ENCODE measurements at regions of chr9 and their contacts with region 1.

Region 1: GRCh38 chr9:130235897-130236668 is 29.5 kb upstream of the HMCN2 start:
- DNase-seq: peak; percentile 50
- ATAC-seq: peak; percentile 63
- H3K4me3 ChIP-seq: no peak overlapping the region
- H3K27ac ChIP-seq: no peak overlapping the region
- H3K4me1 ChIP-seq: peaks cover 8% of the 10 kb centered on the region
- H3K27me3 ChIP-seq: no peaks in the 10 kb centered on the region
- CTCF ChIP-seq: peak; percentile 87
- POLR2A ChIP-seq: no peak
- RAD21 ChIP-seq: peak; percentile 88

Region 2: GRCh38 chr9:130172161-130172857 is 63.8 kb before region 1 on chr9 and contains the start of gene NCS1:
- CTCF ChIA-PET with region 1: no interaction called
- POLR2A ChIA-PET with region 1: no interaction called
- dilution Hi-C with region 1: no loop called
- in situ Hi-C with region 1: no loop called
- intact Hi-C with region 1: loop called (anchors 2 kb)
- DNase-seq: peak; percentile 61
- ATAC-seq: peak; percentile 89
- H3K4me3 ChIP-seq: peak within 1 kb of the TSS; percentile 71
- H3K27ac ChIP-seq: peak within 1 kb of the TSS; percentile 70
- H3K4me1 ChIP-seq: peaks cover 10% of the 10 kb centered on the region
- H3K27me3 ChIP-seq: no peaks in the 10 kb centered on the region
- CTCF ChIP-seq: no peak
- POLR2A ChIP-seq: no peak
- RAD21 ChIP-seq: no peak
- total RNA-seq, gene NCS1: 35.8 and 41.0 TPM in 2 replicates

Region 3: DNA sequence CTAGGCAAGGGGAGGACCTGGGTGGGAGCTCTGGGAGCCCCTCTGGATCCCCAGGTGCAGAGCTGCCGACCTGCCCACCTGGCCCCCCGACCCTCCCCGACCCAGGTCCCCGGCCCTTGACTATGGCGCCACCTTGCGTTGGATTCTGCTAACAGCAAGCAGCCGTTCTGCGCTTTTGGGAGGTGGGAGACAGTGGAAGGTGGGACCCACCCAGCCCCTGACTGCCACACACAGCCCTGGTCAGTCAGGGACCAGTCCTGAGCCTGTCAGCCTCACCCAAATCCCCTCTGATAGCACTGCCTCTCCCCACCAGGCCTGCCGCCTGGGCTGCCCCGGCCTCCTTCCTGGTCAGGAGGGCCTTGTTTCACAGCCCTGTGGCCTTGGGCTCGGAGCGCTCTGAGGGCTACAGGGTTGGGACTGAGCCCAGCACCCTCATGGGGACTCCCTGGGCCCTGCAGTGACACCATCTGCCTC is 107.4 kb after region 1 on chr9:
- CTCF ChIA-PET with region 1: interaction called, 3 read pairs
- POLR2A ChIA-PET with region 1: no interaction called
- dilution Hi-C with region 1: no loop called
- in situ Hi-C with region 1: no loop called
- intact Hi-C with region 1: loop called (anchors 2 kb)
- DNase-seq: no peak
- ATAC-seq: peak; percentile 68
- H3K4me3 ChIP-seq: no peak overlapping the region
- H3K27ac ChIP-seq: no peak overlapping the region
- H3K4me1 ChIP-seq: no peaks in the 10 kb centered on the region
- H3K27me3 ChIP-seq: peaks cover 21% of the 10 kb centered on the region; the same call in 1 of the 2 replicates
- CTCF ChIP-seq: peak; percentile 73
- POLR2A ChIP-seq: no peak
- RAD21 ChIP-seq: peak; percentile 82

Measured in IMR-90 (cell line).